ENCODE measurements at regions of chr15 and their contacts with region 1.

Region 1: DNA sequence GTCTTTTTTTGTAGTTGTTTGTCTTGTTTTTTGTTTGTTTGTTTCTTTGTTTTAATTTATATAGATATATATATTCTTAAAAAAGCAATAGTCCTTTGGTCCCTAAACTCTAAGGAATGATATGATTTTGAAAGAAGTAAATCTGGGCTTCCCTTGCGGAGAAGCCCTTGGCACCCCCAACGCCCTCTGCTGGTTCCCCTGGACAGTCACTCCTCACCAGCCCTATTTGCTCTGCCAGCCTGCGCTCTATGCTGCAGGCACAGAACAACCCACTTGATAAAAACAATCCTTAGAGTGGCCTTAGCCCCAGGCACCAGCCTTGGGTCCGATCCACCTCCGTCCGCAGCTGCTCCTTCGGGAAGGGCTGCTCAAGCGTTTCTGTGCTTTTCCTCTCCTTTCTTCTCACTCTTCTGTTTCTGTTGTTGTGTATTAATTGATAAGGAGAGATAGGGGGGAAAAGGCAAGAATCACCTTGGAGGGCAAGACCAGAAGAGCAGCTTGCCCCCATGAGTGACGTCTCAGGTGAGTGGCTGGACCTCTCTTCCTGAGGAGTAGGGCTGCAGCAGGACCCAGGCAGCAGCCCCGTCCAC is 13.7 kb upstream of the PARP6 start:
- DNase-seq: peak; percentile 82
- ATAC-seq: peak; percentile 86
- H3K4me3 ChIP-seq: no peak overlapping the region
- H3K27ac ChIP-seq: no peak overlapping the region
- H3K4me1 ChIP-seq: no peaks in the 10 kb centered on the region
- H3K27me3 ChIP-seq: no peaks in the 10 kb centered on the region
- CTCF ChIP-seq: peak; percentile 68

Region 2: DNA sequence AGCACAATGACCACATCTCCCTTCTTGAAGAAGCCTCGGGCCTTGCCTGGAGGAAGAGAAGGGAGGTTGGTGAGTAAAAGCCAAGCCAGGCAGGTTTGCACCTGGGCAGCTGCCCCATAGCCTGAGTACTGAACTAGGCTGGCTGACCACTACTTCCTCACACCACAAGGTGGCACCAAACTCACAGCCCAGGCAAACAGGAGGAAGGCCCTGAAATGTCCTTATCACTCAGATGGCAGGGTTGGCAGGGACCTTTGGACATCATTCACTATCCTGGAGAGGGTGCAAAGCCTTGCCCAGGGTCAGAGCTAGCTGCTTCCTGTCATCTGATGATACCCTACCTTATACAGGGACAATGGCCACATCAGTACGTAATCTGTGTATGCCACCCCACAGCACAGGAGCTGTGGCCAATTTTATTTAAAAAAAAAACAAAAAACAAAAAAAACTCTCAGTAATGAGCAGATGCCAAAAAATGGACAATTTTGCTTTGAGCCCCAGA is 86.3 kb before region 1 on chr15:
- intact Hi-C with region 1: loop called (anchors 10 kb)
- DNase-seq: peak; percentile 82
- ATAC-seq: peak; percentile 71
- H3K4me3 ChIP-seq: no peak overlapping the region
- H3K27ac ChIP-seq: peak overlapping the region; percentile 55
- H3K4me1 ChIP-seq: peaks cover 19% of the 10 kb centered on the region
- H3K27me3 ChIP-seq: no peaks in the 10 kb centered on the region
- CTCF ChIP-seq: peak; percentile 92

Region 3: DNA sequence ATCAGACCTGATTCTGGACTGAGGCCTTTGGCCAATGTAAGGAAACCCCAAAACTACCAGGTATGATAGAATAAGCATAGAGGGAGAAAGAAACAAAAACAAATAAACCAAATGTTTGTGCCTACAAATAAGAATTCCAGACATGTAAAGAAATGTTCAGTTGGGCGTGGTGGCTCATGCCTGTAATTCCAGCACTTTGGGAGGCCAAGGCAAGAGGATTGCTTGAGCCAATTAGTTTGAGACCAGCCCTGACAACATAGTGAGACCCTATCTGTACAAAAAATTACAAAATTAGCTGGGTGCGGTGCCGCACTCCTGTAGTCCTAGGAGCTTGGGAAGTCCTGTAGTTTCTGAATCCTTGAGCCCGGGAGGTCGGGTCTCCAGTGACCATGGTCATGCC is 125.1 kb after region 1 on chr15:
- intact Hi-C with region 1: no loop called
- DNase-seq: no peak
- ATAC-seq: no peak
- H3K4me3 ChIP-seq: no peak overlapping the region
- H3K27ac ChIP-seq: no peak overlapping the region
- H3K4me1 ChIP-seq: no peaks in the 10 kb centered on the region
- H3K27me3 ChIP-seq: no peaks in the 10 kb centered on the region
- CTCF ChIP-seq: no peak

Measured in upper lobe of right lung (tissue), 1 donor.